Activated CD4-positive, alpha-beta T cell treated with anti-CD3 and anti-CD28 coated beads for 36 hours (primary cell): ENCODE measurements at regions of chrX and their contacts with region 1.

Region 1: GRCh38 chrX:16603822-16604221 is 46.1 kb upstream of the S100G start:
- DNase-seq: no peak
- ATAC-seq: peak; percentile 88
- H3K4me3 Mint-ChIP-seq: peak overlapping the region; percentile 2
- H3K27ac Mint-ChIP-seq: peak overlapping the region; percentile 76
- H3K4me1 Mint-ChIP-seq: peaks cover 22% of the 10 kb centered on the region
- H3K27me3 Mint-ChIP-seq: no peaks in the 10 kb centered on the region

Region 2: GRCh38 chrX:14832151-14832550 is 1771.7 kb before region 1 on chrX:
- CTCF ChIA-PET with region 1: no interaction called
- POLR2A ChIA-PET with region 1: no interaction called
- intact Hi-C with region 1: no loop called
- DNase-seq: no peak
- ATAC-seq: no peak
- H3K4me3 Mint-ChIP-seq: no peak overlapping the region
- H3K27ac Mint-ChIP-seq: no peak overlapping the region
- H3K4me1 Mint-ChIP-seq: no peaks in the 10 kb centered on the region
- H3K27me3 Mint-ChIP-seq: no peaks in the 10 kb centered on the region

Region 3: DNA sequence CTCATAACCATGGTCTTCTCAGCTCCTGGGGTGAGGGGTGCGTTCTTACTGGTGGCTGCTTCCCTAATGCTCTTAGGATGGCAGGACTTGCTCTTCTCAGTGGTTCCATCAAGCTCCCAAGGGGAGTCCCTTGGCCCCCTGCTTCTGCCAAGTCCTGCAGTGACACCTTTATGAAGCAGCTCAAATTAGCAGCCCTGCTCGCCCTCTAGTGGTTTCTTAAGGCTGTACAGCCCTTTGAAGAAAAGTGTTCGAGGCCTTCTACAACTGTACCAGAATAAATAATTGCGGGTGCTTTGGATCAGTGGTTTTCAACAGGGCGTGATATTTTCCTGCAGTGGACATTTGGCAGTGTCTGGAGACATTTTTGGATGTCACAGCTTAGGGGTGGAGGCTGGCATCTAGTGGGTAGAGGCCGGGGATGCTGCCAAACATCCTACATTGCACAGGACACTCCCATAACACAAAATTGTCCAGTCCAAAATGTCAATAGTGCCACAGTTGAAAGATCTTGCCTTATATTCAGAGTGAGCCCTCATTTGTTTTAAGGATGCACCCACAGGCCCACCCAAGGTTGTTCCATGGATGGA is 158.6 kb before region 1 on chrX:
- CTCF ChIA-PET with region 1: no interaction called
- POLR2A ChIA-PET with region 1: no interaction called
- intact Hi-C with region 1: loop called in 1 of 2 experiments (anchors 10 kb)
- DNase-seq: peak; percentile 53
- ATAC-seq: peak; percentile 66
- H3K4me3 Mint-ChIP-seq: no peak overlapping the region
- H3K27ac Mint-ChIP-seq: no peak overlapping the region
- H3K4me1 Mint-ChIP-seq: peaks cover 11% of the 10 kb centered on the region
- H3K27me3 Mint-ChIP-seq: no peaks in the 10 kb centered on the region

Region 4: GRCh38 chrX:16528620-16529019 is 75.2 kb before region 1 on chrX:
- CTCF ChIA-PET with region 1: interaction called, 4 read pairs
- POLR2A ChIA-PET with region 1: no interaction called
- intact Hi-C with region 1: loop called in 1 of 2 experiments (anchors 10 kb)
- DNase-seq: peak; percentile 62
- ATAC-seq: peak; percentile 88
- H3K4me3 Mint-ChIP-seq: peak overlapping the region; percentile 16
- H3K27ac Mint-ChIP-seq: peak overlapping the region; percentile 87
- H3K4me1 Mint-ChIP-seq: peaks cover 29% of the 10 kb centered on the region
- H3K27me3 Mint-ChIP-seq: no peaks in the 10 kb centered on the region